ENCODE measurements at regions of chr1 and their contacts with region 1.

Region 1: GRCh38 chr1:21189906-21190500 is 13.3 kb upstream of the EIF4G3 start:
- DNase-seq: no peak
- ATAC-seq: no peak
- H3K4me3 ChIP-seq: no peak overlapping the region
- H3K27ac ChIP-seq: no peak overlapping the region
- H3K4me1 ChIP-seq: no peaks in the 10 kb centered on the region
- H3K27me3 ChIP-seq: no peaks in the 10 kb centered on the region
- CTCF ChIP-seq: no peak
- POLR2A ChIP-seq: no peak

Region 2: GRCh38 chr1:20521960-20522861 is 667.8 kb before region 1 on chr1:
- intact Hi-C with region 1: loop called (anchors 10 kb)
- DNase-seq: peak; percentile 83 to 88 (median 85)
- ATAC-seq: peak; percentile 88
- H3K4me3 ChIP-seq: no peak overlapping the region
- H3K27ac ChIP-seq: no peak overlapping the region
- H3K4me1 ChIP-seq: peaks cover 6% of the 10 kb centered on the region
- H3K27me3 ChIP-seq: no peaks in the 10 kb centered on the region
- CTCF ChIP-seq: peak; percentile 81 to 95 (median 93)
- POLR2A ChIP-seq: no peak

Region 3: DNA sequence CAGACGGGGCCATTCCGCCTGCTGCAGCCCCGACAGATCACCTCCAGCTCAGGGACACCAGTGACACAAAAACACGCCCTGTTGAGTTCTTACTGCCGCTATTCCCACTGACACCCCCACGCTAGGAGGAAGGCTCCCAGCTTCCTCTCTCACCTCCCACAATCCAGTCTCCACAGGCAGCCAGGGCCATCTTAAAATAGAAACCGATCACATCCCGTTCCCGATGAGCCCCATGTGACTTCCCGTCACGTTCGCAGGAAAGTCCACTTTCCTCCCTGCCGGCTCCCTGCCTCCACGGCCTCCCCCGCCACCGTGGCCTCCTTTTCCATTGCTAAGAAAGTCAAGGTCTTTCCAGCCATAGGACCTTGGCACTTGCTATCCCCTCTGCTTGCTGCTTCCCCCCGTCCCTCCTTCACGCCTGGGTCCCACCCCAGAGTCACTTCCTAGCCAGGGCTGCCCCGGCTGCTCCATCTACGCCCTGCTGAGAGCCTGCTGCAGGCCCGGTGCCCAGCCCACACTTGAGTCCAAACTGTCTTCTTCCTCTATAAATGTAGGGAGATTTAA is 504.8 kb before region 1 on chr1:
- intact Hi-C with region 1: loop called (anchors 5 kb)
- DNase-seq: peak in 1 of 4 donors; percentile 8
- ATAC-seq: peak; percentile 45
- H3K4me3 ChIP-seq: no peak overlapping the region
- H3K27ac ChIP-seq: peak overlapping the region in 2 of 4 donors; percentile 49 to 50
- H3K4me1 ChIP-seq: peaks cover 2% of the 10 kb centered on the region
- H3K27me3 ChIP-seq: no peaks in the 10 kb centered on the region
- CTCF ChIP-seq: no peak
- POLR2A ChIP-seq: peak in 1 of 3 donors; percentile 13

Region 4: DNA sequence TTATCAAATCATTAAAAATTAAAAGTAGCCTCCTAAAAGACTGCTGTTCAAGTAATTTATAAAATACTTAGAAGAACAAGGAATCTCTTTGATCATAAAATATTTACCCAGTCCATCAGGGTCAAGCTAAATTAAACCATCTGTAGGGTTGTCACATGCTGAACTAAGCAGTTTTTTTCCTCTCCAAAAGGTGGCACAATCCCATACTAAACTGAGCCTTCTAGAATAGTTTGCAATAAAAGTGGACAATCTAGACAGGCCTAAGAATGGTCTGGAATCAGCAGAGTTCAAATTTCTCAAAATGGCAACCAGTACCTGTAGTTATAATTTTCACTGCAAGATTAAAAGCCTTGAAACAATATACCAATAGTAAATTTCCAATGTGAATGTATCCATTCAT is 208.1 kb before region 1 on chr1:
- intact Hi-C with region 1: loop called (anchors 10 kb)
- DNase-seq: peak in 1 of 4 donors; percentile 6
- ATAC-seq: peak; percentile 52
- H3K4me3 ChIP-seq: no peak overlapping the region
- H3K27ac ChIP-seq: no peak overlapping the region
- H3K4me1 ChIP-seq: no peaks in the 10 kb centered on the region
- H3K27me3 ChIP-seq: no peaks in the 10 kb centered on the region
- CTCF ChIP-seq: peak; percentile 7 to 62 (median 41)
- POLR2A ChIP-seq: no peak

Measured in body of pancreas (tissue), 4 donors.